ENCODE measurements at regions of chr12 and their contacts with region 1.

Region 1: DNA sequence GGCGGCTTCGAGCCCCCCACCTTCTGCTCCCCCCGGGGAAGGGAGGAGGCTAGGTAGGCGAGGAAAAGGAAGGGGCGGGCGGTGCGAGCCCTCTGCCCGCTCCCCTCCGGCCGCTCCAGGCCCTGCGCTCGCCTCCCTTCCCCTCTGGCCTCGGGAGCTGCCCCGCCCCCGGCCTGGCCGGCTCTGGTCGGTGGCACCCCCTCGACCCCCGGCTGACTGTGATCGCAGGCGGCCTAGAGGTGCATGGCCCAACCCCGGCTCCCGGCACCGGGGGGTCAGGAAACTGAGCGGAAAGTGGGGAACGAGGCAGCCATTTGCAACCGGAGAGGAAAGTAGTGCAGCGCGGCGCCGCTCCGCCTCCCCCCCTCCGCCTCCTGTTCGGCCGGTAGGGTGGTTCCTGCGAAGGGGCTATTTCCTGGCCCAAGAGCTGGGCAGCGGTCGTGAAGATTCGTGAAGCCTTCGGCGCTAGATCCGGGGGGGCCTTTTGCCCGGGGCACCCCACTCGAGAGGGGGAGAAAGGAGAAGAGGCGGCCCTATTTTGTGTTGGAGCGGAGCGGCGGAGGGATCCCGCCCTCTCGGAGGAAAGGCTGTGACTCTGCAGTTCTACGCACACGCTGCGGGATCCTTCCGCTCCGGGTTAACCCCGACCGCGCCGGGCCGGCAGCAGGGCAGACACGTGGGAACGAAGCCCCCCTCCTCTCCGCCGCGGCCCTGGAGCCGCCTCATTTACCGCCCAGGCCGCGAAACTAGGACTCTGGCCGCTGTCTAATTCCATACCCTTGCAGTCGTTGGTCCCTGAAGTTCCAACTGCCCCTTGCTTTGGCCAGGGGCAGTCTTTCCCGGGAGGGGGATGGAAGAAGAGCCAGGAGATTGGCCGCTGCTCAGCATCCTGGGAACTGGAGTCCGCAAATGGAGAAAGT is at the start of gene KMT2D:
- DNase-seq: peak; percentile 96
- ATAC-seq: peak; percentile 86
- total RNA-seq, gene KMT2D: 33.5 TPM

Region 2: GRCh38 chr12:49018261-49019119 is 42.0 kb before region 1 on chr12 and contains the start of gene PRKAG1:
- intact Hi-C with region 1: loop called (anchors 2 kb)
- DNase-seq: peak; percentile 98
- ATAC-seq: peak; percentile 96
- total RNA-seq, gene PRKAG1: 93.8 TPM

Region 3: GRCh38 chr12:49121047-49121696 is 60.7 kb after region 1 on chr12:
- intact Hi-C with region 1: loop called (anchors 1 kb)
- DNase-seq: no peak
- ATAC-seq: peak; percentile 54

Measured in Right ventricle myocardium inferior (tissue), 1 donor.